ENCODE measurements at regions of chr5 and their contacts with region 1.

Region 1: GRCh38 chr5:81194633-81195333 is 38.3 kb upstream of the CKMT2 start:
- DNase-seq: peak; percentile 39 to 96
- H3K4me3 ChIP-seq: peak overlapping the region in 1 of 4 experiments; percentile 33; a peak in 3 of 8 replicates
- H3K27ac ChIP-seq: no peak overlapping the region
- H3K4me1 ChIP-seq: peaks cover 0 to 3% (median 0%) of the 10 kb centered on the region in 4 experiments; a peak in 1 of 7 replicates
- H3K27me3 ChIP-seq: no peaks in the 10 kb centered on the region; a peak in 1 of 7 replicates
- CTCF ChIP-seq: peak; percentile 78 to 97 (median 88)
- EP300 ChIP-seq: no peak
- POLR2A ChIP-seq: no peak
- RAD21 ChIP-seq: peak; percentile 96 to 99

Region 2: DNA sequence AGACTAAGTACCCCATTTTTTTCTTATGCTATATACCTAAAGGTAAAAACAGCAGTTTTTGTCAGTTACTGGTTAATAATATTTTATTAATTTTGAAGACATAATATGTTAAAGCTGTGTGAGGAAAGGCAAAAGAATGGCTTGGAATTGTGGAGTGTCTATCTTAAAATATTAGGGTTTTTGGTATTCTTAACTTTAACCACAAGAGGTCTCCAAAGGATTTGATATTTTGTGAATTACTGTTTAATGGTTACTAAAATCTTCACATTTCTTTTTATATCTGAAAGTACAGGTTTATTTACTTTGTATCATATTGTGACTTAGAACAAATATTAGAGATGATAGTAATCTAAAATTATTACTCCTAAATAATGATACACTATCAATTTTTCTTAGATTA is 508.0 kb before region 1 on chr5:
- CTCF ChIA-PET with region 1: interaction called, 11 read pairs
- POLR2A ChIA-PET with region 1: no interaction called
- DNase-seq: no peak
- H3K4me3 ChIP-seq: no peak overlapping the region
- H3K27ac ChIP-seq: no peak overlapping the region
- H3K4me1 ChIP-seq: peaks cover 0 to 3% (median 2%) of the 10 kb centered on the region in 4 experiments; a peak in 2 of 7 replicates
- H3K27me3 ChIP-seq: peaks cover 0 to 1% (median 0%) of the 10 kb centered on the region in 4 experiments; a peak in 1 of 7 replicates
- CTCF ChIP-seq: peak in 1 of 3 experiments; percentile 6; a peak in 1 of 4 replicates
- EP300 ChIP-seq: no peak
- POLR2A ChIP-seq: no peak
- RAD21 ChIP-seq: peak in 1 of 2 experiments; percentile 41; a peak in 2 of 4 replicates

Region 3: DNA sequence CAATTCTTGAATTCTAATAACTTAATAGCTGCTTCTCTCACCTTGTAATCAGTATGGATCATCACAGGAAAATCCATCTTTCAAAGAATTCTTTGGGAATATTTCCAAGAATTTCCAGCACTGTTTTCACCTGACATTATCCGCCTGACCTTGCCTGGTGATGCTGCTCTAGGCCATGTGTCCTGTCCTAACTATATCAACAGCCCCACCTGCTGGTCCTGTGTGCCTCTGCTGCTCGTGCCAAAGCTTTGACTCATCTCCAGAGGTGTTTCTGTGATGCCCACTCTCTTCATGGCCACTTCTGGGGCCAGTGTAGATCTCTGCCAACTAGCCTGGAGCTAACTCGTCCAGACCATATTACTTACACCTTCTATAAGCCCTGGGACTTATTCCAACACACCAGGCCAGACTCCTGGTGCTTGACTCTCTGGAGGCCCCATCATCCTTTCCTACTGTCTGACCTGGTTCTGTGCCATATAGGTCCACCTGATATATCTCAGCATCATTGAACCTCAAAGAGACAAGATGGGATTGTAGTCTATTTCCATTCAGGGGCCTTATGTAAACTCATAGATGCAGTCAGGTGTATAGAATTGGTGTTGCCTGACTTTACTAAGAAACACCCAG is 29.2 kb before region 1 on chr5:
- CTCF ChIA-PET with region 1: interaction called, 12 read pairs
- POLR2A ChIA-PET with region 1: no interaction called
- DNase-seq: peak; percentile 38 to 77
- H3K4me3 ChIP-seq: no peak overlapping the region
- H3K27ac ChIP-seq: no peak overlapping the region
- H3K4me1 ChIP-seq: no peaks in the 10 kb centered on the region
- H3K27me3 ChIP-seq: no peaks in the 10 kb centered on the region
- CTCF ChIP-seq: peak; percentile 85 to 96 (median 95)
- EP300 ChIP-seq: no peak
- POLR2A ChIP-seq: no peak
- RAD21 ChIP-seq: peak; percentile 93 to 96

Region 4: DNA sequence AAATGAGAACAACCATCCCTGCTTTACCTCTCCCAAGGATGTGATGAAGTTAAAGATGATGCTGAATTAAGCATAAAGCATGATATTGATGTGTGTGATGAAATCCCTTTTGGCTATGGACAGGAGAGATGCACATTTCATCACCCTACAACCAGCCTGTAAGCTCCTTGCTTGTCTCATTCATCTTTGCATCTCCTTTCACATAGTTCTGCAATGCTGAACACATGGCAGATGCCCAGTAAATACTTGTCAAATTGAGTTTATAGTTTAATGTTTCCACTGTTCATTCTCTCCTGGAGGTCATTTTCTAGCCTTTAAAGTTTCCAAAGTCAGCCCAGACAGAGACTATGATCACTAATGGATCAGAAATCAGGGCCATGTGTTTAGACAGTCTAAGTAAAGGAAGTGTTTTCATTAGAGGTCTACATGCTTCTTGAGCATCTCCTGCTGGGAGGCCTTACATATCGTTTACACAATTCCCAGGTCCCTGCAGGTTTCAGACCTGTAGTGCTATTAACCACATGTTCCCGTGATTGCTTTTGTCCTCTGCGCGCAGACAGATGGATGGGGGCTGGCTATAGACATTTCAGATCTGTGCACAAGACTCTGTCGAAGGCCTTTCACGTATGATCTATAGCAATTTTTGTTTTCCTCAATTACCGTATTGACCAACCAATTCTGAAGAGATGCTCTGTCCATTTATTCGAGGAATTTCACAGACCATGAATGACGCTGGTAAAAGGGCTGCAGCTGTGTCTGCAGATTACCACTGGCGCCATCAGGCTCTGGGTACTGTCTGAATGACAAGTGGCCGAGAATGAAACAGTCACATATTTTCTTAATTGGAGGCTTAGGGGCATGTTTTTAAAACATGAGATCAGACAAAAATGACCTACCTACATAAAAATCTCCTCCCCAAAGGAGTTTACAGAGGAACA is 10.7 kb before region 1 on chr5:
- CTCF ChIA-PET with region 1: interaction called, 53 read pairs
- POLR2A ChIA-PET with region 1: no interaction called
- DNase-seq: no peak
- H3K4me3 ChIP-seq: no peak overlapping the region
- H3K27ac ChIP-seq: no peak overlapping the region
- H3K4me1 ChIP-seq: peaks cover 2 to 14% (median 10%) of the 10 kb centered on the region in 4 experiments; a peak in 6 of 7 replicates
- H3K27me3 ChIP-seq: no peaks in the 10 kb centered on the region
- CTCF ChIP-seq: no peak
- EP300 ChIP-seq: no peak
- POLR2A ChIP-seq: no peak
- RAD21 ChIP-seq: no peak

Region 5: DNA sequence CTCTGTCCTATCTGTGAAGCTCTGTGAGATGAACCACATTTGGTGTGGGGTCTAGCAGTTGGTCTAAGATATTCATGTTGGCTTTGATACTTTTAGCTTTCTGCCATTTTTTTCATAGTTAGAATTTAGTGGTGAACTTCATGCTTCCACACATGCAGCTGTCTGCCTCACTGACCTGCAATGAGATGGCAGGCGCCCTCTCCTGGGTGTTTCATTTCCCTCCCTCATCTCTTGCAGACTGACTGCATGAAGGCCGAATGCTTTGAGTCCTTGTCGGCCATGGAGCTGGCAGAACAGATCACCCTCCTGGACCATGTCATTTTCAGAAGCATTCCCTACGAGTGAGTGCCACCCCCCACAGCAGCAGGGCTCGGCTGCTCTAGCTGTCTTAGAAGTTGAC is 12.2 kb after region 1 on chr5:
- CTCF ChIA-PET with region 1: interaction called, 64 read pairs
- POLR2A ChIA-PET with region 1: no interaction called
- DNase-seq: no peak
- H3K4me3 ChIP-seq: no peak overlapping the region
- H3K27ac ChIP-seq: no peak overlapping the region
- H3K4me1 ChIP-seq: no peaks in the 10 kb centered on the region
- H3K27me3 ChIP-seq: no peaks in the 10 kb centered on the region
- CTCF ChIP-seq: peak; percentile 46 to 71 (median 66)
- EP300 ChIP-seq: no peak
- POLR2A ChIP-seq: no peak
- RAD21 ChIP-seq: peak; percentile 45 to 56

Measured in H1 (cell line).